PC-9 (cell line): ENCODE measurements at regions of chr4 and their contacts with region 1.

Region 1: GRCh38 chr4:47686294-47686872 is 151.5 kb downstream of the CORIN start:
- DNase-seq: peak in 1 of 2 experiments; percentile 41
- H3K4me3 ChIP-seq: no peak overlapping the region
- H3K27ac ChIP-seq: no peak overlapping the region
- H3K4me1 ChIP-seq: no peaks in the 10 kb centered on the region
- H3K27me3 ChIP-seq: no peaks in the 10 kb centered on the region
- CTCF ChIP-seq: peak; percentile 68

Region 2: DNA sequence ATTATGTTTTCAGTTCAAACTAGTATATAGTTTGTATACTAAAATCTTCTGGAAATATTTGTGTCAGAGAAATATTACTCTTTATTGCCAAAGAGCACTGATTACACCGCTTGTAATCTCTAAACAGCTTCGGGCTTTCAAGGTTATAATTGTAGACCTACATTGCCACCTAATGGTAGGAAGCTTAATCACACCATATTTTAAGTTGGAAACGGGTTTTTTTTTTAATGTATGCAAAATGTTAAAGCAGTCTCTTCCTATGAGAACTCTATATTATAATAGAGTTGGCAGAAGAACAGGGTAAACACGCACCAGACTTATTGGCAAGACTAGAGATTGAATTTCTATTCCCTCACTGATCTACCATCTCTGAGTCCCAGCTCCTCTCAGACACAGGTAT is 247.5 kb after region 1 on chr4:
- CTCF ChIA-PET with region 1: no interaction called
- POLR2A ChIA-PET with region 1: no interaction called
- intact Hi-C with region 1: loop called (anchors 5 kb)
- DNase-seq: peak in 1 of 2 experiments; percentile 41
- H3K4me3 ChIP-seq: no peak overlapping the region
- H3K27ac ChIP-seq: no peak overlapping the region
- H3K4me1 ChIP-seq: no peaks in the 10 kb centered on the region
- H3K27me3 ChIP-seq: no peaks in the 10 kb centered on the region
- CTCF ChIP-seq: peak; percentile 85